HEK293 (cell line): ENCODE measurements at regions of chr1 and their contacts with region 1.

Region 1: DNA sequence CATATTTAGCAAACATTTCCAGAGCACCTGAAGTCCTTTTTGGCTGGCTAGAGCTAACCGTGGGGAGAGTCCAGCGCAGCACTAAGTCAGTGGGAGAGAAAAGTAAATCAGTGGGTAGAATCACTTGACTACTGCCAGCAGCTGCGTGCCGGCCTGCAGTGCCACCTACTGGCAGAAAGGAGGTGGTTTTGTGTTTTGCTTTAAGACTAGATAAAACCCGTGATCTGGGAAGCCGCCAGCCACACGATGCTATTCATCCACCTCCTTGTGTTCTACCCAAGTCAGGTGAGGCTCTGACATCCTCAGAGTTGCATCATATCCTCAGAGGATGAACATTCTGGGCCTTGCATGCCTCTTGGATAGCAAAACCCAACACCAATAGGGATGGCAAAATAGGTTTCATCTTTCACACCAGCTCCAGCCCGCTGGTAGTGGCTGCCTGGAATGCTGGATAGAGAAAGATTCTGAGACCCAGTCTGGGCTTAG is 14.1 kb upstream of the HEYL start:
- H3K4me3 ChIP-seq: no peak overlapping the region
- H3K27ac ChIP-seq: no peak overlapping the region
- H3K4me1 ChIP-seq: no peaks in the 10 kb centered on the region
- CTCF ChIP-seq: peak; percentile 83

Region 2: GRCh38 chr1:39538588-39539465 is 114.8 kb before region 1 on chr1:
- CTCF ChIA-PET with region 1: interaction called, 10 read pairs
- POLR2A ChIA-PET with region 1: no interaction called
- H3K4me3 ChIP-seq: no peak overlapping the region
- H3K27ac ChIP-seq: no peak overlapping the region
- H3K4me1 ChIP-seq: no peaks in the 10 kb centered on the region
- CTCF ChIP-seq: peak; percentile 80; the same call in 1 of the 2 replicates

Region 3: DNA sequence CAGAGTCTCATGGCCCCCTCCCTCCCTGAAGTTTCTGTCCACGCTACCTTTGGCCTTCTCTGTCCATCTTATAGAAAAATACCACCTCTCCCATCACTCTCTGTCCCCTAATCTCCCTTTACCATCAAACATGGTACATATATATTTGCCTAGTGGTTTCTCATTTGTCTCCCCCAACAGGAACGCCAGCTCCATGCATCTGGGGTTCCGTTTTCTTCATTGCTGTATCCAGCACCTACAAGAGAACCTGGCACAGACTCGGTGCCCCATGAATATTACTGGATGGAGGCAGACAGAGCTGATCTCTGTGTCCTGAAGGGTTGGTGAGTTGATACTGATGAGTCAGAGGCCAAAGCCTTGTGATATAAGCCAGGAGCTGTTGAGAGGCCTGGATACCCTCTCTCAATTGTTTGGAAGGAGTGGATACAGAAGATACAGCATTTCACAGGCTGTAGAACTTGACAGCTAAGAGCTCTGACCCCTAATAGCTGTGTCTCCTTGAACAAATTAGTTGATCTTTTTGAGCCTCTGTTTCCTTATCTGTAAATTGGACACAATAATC is 36.0 kb before region 1 on chr1:
- CTCF ChIA-PET with region 1: interaction called, 350 read pairs
- POLR2A ChIA-PET with region 1: no interaction called
- H3K4me3 ChIP-seq: no peak overlapping the region
- H3K27ac ChIP-seq: no peak overlapping the region
- H3K4me1 ChIP-seq: no peaks in the 10 kb centered on the region
- CTCF ChIP-seq: no peak

Region 4: GRCh38 chr1:39639305-39640130 is 14.1 kb before region 1 on chr1 and contains the start of gene HEYL:
- CTCF ChIA-PET with region 1: interaction called, 21 read pairs
- POLR2A ChIA-PET with region 1: no interaction called
- H3K4me3 ChIP-seq: peak within 1 kb of the TSS; percentile 53
- H3K27ac ChIP-seq: peak within 1 kb of the TSS; percentile 58; the same call in 1 of the 2 replicates
- H3K4me1 ChIP-seq: no peaks in the 10 kb centered on the region
- CTCF ChIP-seq: peak; percentile 95

Region 5: GRCh38 chr1:39680751-39681150 is 27.2 kb after region 1 on chr1:
- CTCF ChIA-PET with region 1: interaction called, 181 read pairs
- POLR2A ChIA-PET with region 1: no interaction called
- H3K4me3 ChIP-seq: no peak overlapping the region
- H3K27ac ChIP-seq: no peak overlapping the region
- H3K4me1 ChIP-seq: no peaks in the 10 kb centered on the region
- CTCF ChIP-seq: no peak

Region 6: GRCh38 chr1:39701049-39701439 is 47.5 kb after region 1 on chr1:
- CTCF ChIA-PET with region 1: interaction called, 29 read pairs
- POLR2A ChIA-PET with region 1: no interaction called
- H3K4me3 ChIP-seq: no peak overlapping the region
- H3K27ac ChIP-seq: no peak overlapping the region
- H3K4me1 ChIP-seq: no peaks in the 10 kb centered on the region
- CTCF ChIP-seq: no peak

Region 7: GRCh38 chr1:39720094-39720999 is 66.8 kb after region 1 on chr1:
- CTCF ChIA-PET with region 1: interaction called, 15 read pairs
- POLR2A ChIA-PET with region 1: no interaction called
- H3K4me3 ChIP-seq: no peak overlapping the region
- H3K27ac ChIP-seq: no peak overlapping the region
- H3K4me1 ChIP-seq: no peaks in the 10 kb centered on the region
- CTCF ChIP-seq: peak; percentile 62

Region 8: GRCh38 chr1:40224040-40224439 is 570.5 kb after region 1 on chr1:
- CTCF ChIA-PET with region 1: no interaction called
- POLR2A ChIA-PET with region 1: no interaction called
- H3K4me3 ChIP-seq: no peak overlapping the region
- H3K27ac ChIP-seq: no peak overlapping the region
- H3K4me1 ChIP-seq: no peaks in the 10 kb centered on the region
- CTCF ChIP-seq: no peak